ENCODE measurements at regions of chr2 and their contacts with region 1.

Region 1: DNA sequence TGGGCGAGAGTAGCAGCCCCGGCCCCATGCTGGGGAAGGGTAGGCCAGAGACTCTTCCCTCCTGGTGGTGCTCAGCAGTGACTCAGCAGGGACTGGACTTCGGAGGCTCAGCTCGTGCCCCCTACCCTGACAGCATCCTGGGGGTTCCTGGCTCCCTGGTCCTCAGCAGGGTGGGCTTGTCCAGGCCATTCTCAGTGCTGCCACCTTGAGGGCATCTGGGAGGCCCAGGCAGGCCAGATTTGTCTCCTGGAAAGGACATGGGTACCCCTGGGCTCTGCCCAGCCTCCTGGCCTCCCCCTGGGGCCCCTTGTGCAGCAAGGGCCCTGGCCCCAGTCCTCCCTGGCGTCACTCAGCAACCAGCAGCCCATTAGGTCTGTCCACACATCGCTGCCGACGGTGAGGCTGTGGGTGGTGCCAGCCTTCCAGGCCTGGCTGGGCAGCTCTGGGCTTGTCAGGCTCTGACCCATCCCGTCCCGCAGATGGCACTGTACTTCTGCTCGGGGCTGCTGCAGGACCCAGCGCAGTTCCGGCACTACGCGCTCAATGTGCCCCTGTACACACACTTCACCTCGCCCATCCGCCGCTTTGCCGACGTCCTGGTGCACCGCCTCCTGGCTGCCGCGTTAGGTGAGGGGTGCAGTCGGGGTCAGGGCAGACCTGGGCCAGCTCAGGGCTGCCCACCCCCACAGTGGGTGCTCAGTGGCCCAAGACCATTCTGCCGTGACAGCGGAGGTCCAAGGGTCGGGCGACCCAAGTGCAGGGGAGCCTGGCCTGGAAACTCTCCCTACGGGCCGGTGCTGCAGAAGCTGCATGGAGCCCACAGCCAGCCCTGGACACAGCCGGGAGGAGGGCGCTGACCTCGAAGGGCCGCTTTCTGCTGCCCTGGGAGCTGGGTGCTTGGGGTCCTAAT is 44.9 kb upstream of the ALPP start:
- DNase-seq: no peak
- H3K4me3 ChIP-seq: no peak overlapping the region
- H3K27ac ChIP-seq: no peak overlapping the region
- H3K27me3 ChIP-seq: no peaks in the 10 kb centered on the region
- CTCF ChIP-seq: peak; percentile 53

Region 2: DNA sequence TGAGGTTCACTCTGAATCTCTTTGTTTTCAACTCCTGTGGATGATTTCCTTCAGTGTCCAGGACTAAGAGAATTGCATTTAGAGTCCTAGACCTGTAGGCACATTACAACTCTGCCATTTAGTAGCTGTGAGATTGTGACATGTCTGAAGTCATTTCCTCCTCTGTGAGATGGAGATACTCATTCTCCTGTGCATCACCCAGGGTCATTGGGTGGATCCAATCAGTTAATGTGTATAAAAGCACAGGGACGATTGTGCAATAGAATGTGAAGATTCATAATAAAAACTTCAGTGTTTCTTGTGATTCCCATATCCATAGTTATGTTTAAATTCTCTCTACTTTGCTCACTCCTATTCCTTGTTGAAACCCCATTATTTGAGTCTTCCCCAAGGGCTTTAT is 258.5 kb before region 1 on chr2:
- CTCF ChIA-PET with region 1: no interaction called
- POLR2A ChIA-PET with region 1: interaction called, 12 read pairs
- DNase-seq: no peak
- H3K4me3 ChIP-seq: no peak overlapping the region
- H3K27ac ChIP-seq: no peak overlapping the region
- H3K27me3 ChIP-seq: no peaks in the 10 kb centered on the region
- CTCF ChIP-seq: no peak

Region 3: GRCh38 chr2:232420463-232421188 is 87.0 kb after region 1 on chr2:
- CTCF ChIA-PET with region 1: no interaction called
- POLR2A ChIA-PET with region 1: no interaction called
- DNase-seq: no peak
- H3K4me3 ChIP-seq: no peak overlapping the region
- H3K27ac ChIP-seq: no peak overlapping the region
- H3K27me3 ChIP-seq: peaks cover 66% of the 10 kb centered on the region
- CTCF ChIP-seq: no peak

Region 4: GRCh38 chr2:232744963-232745362 is 411.3 kb after region 1 on chr2:
- CTCF ChIA-PET with region 1: no interaction called
- POLR2A ChIA-PET with region 1: no interaction called
- DNase-seq: no peak
- H3K4me3 ChIP-seq: no peak overlapping the region
- H3K27ac ChIP-seq: no peak overlapping the region
- H3K27me3 ChIP-seq: no peaks in the 10 kb centered on the region
- CTCF ChIP-seq: no peak